AG04449 (cell line): ENCODE measurements at regions of chr2 and their contacts with region 1.

Region 1: DNA sequence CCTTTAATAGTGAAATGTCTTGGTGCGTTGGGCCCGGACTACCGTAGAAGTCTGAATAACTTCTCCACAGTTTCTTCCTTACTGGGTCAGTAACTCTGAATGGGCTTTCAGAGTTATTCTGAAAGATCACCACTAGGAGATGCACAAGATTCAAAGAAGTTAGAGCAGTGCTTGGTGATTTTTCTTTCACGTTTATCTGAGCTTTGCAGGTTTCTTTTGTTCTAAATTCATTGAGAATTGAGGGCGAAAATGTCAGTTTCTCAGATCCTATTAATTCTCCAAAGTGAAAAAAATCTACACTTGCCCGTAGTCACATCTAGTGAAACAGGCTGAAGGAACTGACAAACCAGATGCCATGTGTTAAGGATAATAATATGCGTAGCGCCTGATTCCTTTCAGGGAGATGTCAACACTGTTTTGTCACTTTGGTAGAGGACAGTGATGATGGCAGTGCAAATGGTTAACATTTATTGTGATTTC is 70.1 kb downstream of the QPCT start:
- DNase-seq: no peak
- H3K4me3 ChIP-seq: no peak overlapping the region
- CTCF ChIP-seq: peak; percentile 75

Region 2: DNA sequence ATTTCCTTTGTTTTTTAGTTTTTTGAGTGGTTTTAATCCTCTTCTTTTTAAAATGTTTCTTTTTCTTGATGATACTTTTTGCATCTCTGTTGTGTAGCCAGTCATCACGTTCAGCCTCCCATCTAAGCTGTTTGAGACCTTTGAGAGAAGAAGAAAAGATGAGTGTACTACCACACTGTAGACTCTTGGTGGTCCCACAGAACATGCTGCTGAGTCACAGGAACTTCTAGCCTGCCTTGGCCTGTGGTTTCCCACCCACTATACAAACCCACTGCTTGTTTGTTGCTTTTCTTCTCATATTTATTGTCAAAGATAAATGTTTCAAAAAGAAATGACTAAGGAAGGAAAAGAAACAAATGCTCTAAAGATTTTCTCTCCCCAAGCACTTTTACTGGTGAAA is 212.7 kb before region 1 on chr2:
- CTCF ChIA-PET with region 1: no interaction called
- POLR2A ChIA-PET with region 1: no interaction called
- DNase-seq: no peak
- H3K4me3 ChIP-seq: no peak overlapping the region
- CTCF ChIP-seq: no peak

Region 3: GRCh38 chr2:37402636-37403035 is 11.9 kb before region 1 on chr2:
- CTCF ChIA-PET with region 1: interaction called, 100 read pairs
- POLR2A ChIA-PET with region 1: no interaction called
- DNase-seq: no peak
- H3K4me3 ChIP-seq: no peak overlapping the region
- CTCF ChIP-seq: no peak

Region 4: GRCh38 chr2:37623971-37624900 is 209.7 kb after region 1 on chr2:
- CTCF ChIA-PET with region 1: interaction called, 32 read pairs
- POLR2A ChIA-PET with region 1: no interaction called
- DNase-seq: no peak
- H3K4me3 ChIP-seq: no peak overlapping the region
- CTCF ChIP-seq: no peak

Region 5: GRCh38 chr2:37641582-37642171 is 227.2 kb after region 1 on chr2:
- CTCF ChIA-PET with region 1: interaction called, 24 read pairs
- POLR2A ChIA-PET with region 1: no interaction called
- DNase-seq: no peak
- H3K4me3 ChIP-seq: no peak overlapping the region
- CTCF ChIP-seq: no peak

Region 6: DNA sequence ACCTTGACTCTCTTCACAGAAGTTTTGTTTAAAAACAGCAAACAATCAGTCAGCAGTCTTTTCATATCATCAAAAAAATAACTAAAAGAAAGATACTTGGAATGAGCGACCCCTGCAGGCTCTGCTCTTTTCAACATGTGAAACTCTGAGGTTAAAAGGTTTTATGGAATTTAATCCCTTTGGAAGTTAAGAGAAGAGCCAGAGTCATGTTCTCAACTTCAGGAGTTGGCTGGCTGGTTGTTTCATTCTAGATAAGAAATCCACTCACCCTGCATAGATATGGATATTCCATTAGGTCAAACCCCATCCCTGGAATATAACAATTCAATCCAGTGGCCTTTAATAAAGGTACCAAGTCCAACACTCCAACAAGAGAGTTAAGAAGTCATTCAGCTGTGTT is 395.0 kb after region 1 on chr2:
- CTCF ChIA-PET with region 1: interaction called, 13 read pairs
- POLR2A ChIA-PET with region 1: no interaction called
- DNase-seq: no peak
- H3K4me3 ChIP-seq: no peak overlapping the region
- CTCF ChIP-seq: peak; percentile 35

Region 7: GRCh38 chr2:37871456-37872191 is 457.1 kb after region 1 on chr2:
- CTCF ChIA-PET with region 1: interaction called, 177 read pairs
- POLR2A ChIA-PET with region 1: no interaction called
- DNase-seq: no peak
- H3K4me3 ChIP-seq: no peak overlapping the region
- CTCF ChIP-seq: no peak